Caco-2 (cell line): ENCODE measurements at regions of chr6 and their contacts with region 1.

Region 1: GRCh38 chr6:47111685-47112084 is 69.6 kb upstream of the ADGRF1 start:
- DNase-seq: peak; percentile 72 to 88
- H3K4me3 ChIP-seq: no peak overlapping the region
- H3K4me3 Mint-ChIP-seq: peak overlapping the region; percentile 36
- H3K27ac Mint-ChIP-seq: peak overlapping the region; percentile 68
- H3K4me1 ChIP-seq: peaks cover 65% of the 10 kb centered on the region
- H3K4me1 Mint-ChIP-seq: peaks cover 36% of the 10 kb centered on the region
- H3K27me3 ChIP-seq: no peaks in the 10 kb centered on the region
- H3K27me3 Mint-ChIP-seq: no peaks in the 10 kb centered on the region
- CTCF ChIP-seq: no peak

Region 2: DNA sequence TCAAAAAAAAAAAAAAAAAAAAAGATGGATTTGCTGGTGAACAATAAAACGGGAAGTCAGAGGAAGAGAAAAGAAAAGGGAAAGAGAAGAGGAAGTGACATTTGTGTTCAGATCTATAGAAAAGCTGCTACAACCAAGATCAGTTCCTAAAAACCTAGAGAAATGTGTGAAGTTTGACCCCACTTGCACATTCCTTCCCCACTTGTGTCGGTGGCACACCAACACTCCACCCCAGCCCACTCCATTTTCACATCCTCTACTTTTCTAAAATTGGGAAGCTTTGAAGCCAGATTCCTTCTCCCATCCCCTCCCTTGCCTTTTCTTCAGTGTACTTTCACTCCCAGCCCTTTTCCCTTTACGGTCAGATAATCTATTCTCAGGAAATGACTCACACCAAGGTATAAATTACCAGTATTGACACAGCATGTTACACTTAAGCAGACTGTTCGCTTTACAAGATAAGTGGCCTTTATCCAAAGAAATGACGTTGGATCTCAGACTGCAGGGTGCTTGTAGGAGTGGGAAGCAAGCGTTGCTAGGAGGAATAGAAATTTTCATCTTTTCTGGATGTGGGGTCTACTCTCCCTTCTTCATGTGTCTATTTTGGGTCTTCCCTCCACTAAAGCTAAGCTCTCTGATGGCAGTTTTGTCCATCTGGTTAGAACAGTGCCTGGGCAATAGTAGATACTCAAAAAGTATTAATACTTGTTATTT is 22.9 kb after region 1 on chr6:
- CTCF ChIA-PET with region 1: no interaction called
- POLR2A ChIA-PET with region 1: no interaction called
- intact Hi-C with region 1: loop called (anchors 1 kb)
- DNase-seq: peak; percentile 54 to 61
- H3K4me3 ChIP-seq: no peak overlapping the region
- H3K4me3 Mint-ChIP-seq: peak overlapping the region; percentile 52
- H3K27ac Mint-ChIP-seq: peak overlapping the region; percentile 81
- H3K4me1 ChIP-seq: peaks cover 53% of the 10 kb centered on the region
- H3K4me1 Mint-ChIP-seq: peaks cover 48% of the 10 kb centered on the region
- H3K27me3 ChIP-seq: no peaks in the 10 kb centered on the region
- H3K27me3 Mint-ChIP-seq: no peaks in the 10 kb centered on the region
- CTCF ChIP-seq: no peak

Region 3: GRCh38 chr6:47235964-47236760 is 124.5 kb after region 1 on chr6:
- CTCF ChIA-PET with region 1: no interaction called
- POLR2A ChIA-PET with region 1: no interaction called
- intact Hi-C with region 1: no loop called
- DNase-seq: no peak
- H3K4me3 ChIP-seq: no peak overlapping the region
- H3K4me3 Mint-ChIP-seq: no peak overlapping the region
- H3K27ac Mint-ChIP-seq: peak overlapping the region; percentile 17
- H3K4me1 ChIP-seq: peaks cover 58% of the 10 kb centered on the region
- H3K4me1 Mint-ChIP-seq: peaks cover 28% of the 10 kb centered on the region
- H3K27me3 ChIP-seq: no peaks in the 10 kb centered on the region
- H3K27me3 Mint-ChIP-seq: no peaks in the 10 kb centered on the region
- CTCF ChIP-seq: no peak